CD4-positive, alpha-beta T cell (primary cell): ENCODE measurements at regions of chr17 and their contacts with region 1.

Region 1: DNA sequence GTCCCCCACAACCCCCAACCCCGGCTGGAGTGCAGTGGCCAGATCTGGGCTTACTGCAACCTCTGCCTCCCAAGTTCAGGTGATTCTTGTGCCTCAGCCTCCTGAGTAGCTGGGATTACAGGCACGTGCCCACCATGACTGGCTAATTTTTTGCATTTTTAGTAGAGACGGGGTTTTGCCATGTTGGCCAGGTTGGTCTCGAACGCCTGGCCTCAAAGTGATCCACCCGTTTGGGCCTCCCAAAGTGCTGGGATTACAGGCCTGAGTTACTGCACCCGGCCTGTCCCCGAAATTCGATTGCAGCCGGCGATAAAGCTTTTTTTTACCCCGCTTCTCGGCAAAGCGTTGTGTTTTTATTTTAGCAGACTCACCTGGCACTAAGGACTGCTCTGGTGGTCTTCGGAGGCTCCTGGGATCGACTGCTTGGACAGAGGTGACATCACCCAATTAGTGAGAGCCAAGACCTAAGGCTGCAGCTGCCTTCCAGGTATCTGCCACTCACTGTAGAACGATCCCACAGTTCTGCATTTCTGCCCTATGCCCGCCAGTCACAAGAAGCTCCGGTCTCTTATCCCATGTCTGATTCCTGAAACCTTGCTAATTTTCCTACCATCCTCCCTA is 82.2 kb upstream of the ARL4D start:
- DNase-seq: peak in 3 of 14 experiments; percentile 23 to 66 (median 42)
- ATAC-seq: no peak
- H3K4me3 ChIP-seq: no peak overlapping the region
- H3K4me3 Mint-ChIP-seq: peak overlapping the region; percentile 20
- H3K27ac ChIP-seq: no peak overlapping the region
- H3K27ac Mint-ChIP-seq: no peak overlapping the region
- H3K4me1 ChIP-seq: no peaks in the 10 kb centered on the region
- H3K4me1 Mint-ChIP-seq: peaks cover 4% of the 10 kb centered on the region
- H3K27me3 ChIP-seq: no peaks in the 10 kb centered on the region
- H3K27me3 Mint-ChIP-seq: no peaks in the 10 kb centered on the region
- CTCF ChIP-seq: no peak

Region 2: GRCh38 chr17:43024407-43025289 is 292.0 kb before region 1 on chr17 and contains the start of gene RND2:
- CTCF ChIA-PET with region 1: interaction called, 3 read pairs
- POLR2A ChIA-PET with region 1: interaction called, 13 read pairs
- intact Hi-C with region 1: no loop called
- DNase-seq: peak; percentile 60 to 91 (median 71)
- ATAC-seq: peak; percentile 56
- H3K4me3 ChIP-seq: peak within 1 kb of the TSS; percentile 74
- H3K4me3 Mint-ChIP-seq: peak within 1 kb of the TSS; percentile 90
- H3K27ac ChIP-seq: peak within 1 kb of the TSS in 1 of 2 donors; percentile 56
- H3K27ac Mint-ChIP-seq: peak within 1 kb of the TSS; percentile 77
- H3K4me1 ChIP-seq: peaks cover 48% of the 10 kb centered on the region
- H3K4me1 Mint-ChIP-seq: peaks cover 28% of the 10 kb centered on the region
- H3K27me3 ChIP-seq: no peaks in the 10 kb centered on the region
- H3K27me3 Mint-ChIP-seq: no peaks in the 10 kb centered on the region
- CTCF ChIP-seq: peak; percentile 21
- total RNA-seq, gene RND2: 0.27 to 0.28 TPM

Region 3: GRCh38 chr17:43170766-43171585 is 145.7 kb before region 1 on chr17 and contains the start of gene NBR1:
- CTCF ChIA-PET with region 1: interaction called, 3 read pairs
- POLR2A ChIA-PET with region 1: interaction called, 25 read pairs
- intact Hi-C with region 1: loop called in 1 of 2 experiments (anchors 2 kb)
- DNase-seq: peak; percentile 90 to 99 (median 92)
- ATAC-seq: peak; percentile 76
- H3K4me3 ChIP-seq: peak within 1 kb of the TSS; percentile 71
- H3K4me3 Mint-ChIP-seq: no peak within 1 kb of the TSS
- H3K27ac ChIP-seq: peak within 1 kb of the TSS; percentile 98
- H3K27ac Mint-ChIP-seq: no peak within 1 kb of the TSS
- H3K4me1 ChIP-seq: peaks cover 47% of the 10 kb centered on the region
- H3K4me1 Mint-ChIP-seq: peaks cover 27% of the 10 kb centered on the region
- H3K27me3 ChIP-seq: no peaks in the 10 kb centered on the region
- H3K27me3 Mint-ChIP-seq: no peaks in the 10 kb centered on the region
- CTCF ChIP-seq: no peak
- total RNA-seq, gene NBR1: 23.7 TPM

Region 4: DNA sequence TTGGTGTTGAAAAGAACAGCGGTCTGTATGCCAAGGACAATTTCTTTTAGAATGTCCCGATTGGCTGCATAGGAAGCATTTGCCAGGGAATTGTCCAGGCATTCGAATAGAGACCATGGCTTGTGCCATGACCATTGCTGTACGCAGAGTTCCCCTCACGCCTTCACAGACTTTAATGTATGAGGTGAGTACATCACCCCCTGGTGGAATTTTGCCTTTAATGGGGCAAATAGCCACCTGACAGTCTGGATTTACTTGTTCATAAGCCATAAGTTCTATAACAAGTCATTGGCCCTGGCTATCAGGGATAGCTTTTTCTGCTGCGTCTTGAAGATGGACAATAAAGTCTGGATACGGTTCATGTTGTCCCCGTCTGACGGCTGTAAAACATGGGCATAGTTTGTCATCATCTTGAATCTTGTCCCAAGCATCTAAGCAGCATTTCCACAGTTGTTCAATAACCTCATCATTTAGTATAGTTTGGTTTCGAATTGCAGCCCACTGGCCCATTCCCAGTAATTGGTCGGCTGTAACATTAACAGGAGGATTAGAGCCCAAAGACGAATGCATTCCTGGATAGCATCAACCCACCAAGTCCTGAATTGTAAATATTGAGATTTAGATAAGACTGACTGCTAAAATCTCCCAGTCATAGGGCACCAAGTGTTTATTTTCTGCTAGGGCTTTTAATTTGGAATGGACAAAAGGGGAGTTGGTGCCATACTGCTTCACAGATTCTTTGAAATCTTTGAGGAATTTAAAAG is 14.4 kb after region 1 on chr17:
- CTCF ChIA-PET with region 1: interaction called, 6 read pairs
- POLR2A ChIA-PET with region 1: interaction called, 16 read pairs
- intact Hi-C with region 1: no loop called
- DNase-seq: no peak
- ATAC-seq: no peak
- H3K4me3 ChIP-seq: no peak overlapping the region
- H3K4me3 Mint-ChIP-seq: no peak overlapping the region
- H3K27ac ChIP-seq: no peak overlapping the region
- H3K27ac Mint-ChIP-seq: no peak overlapping the region
- H3K4me1 ChIP-seq: peaks cover 8% of the 10 kb centered on the region
- H3K4me1 Mint-ChIP-seq: peaks cover 7% of the 10 kb centered on the region
- H3K27me3 ChIP-seq: peaks cover 0 to 5% of the 10 kb centered on the region in 2 experiments
- H3K27me3 Mint-ChIP-seq: peaks cover 18% of the 10 kb centered on the region
- CTCF ChIP-seq: no peak

Region 5: DNA sequence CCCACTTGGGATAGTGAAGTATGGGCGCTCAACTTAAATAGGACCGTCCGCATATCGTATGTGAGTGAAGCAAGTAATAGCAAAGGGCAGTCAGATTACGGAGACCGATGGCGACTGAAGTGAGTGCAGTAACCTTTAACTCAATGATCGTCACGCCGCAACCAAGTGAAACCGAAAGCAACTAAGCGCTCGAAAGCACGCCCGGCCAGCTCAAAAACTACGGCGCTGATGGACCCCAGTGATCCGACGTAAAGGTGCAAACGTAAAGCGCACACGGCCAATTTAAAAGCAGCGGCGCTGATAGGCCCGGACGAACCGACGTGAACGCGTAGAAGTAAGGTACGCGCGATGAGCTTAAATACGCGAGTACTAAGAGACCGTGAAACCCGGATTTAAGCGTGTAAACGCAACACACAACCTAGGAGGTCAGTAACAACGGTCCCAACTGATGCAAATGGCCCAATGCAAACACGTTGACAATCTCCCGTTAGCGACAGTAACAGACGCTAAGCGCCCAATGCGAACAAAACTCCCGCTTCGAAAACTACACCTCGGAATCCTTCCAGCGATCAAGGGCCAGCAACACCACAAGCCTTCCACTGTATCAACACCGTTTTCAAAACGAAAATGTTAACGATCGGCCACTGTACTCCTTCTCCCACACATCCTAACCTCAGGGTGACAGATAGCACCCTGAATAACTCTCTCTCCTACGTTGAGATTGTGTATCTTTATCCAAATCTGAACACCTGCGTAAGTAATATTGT is 44.3 kb after region 1 on chr17:
- CTCF ChIA-PET with region 1: interaction called, 3 read pairs
- POLR2A ChIA-PET with region 1: interaction called, 119 read pairs
- intact Hi-C with region 1: no loop called
- DNase-seq: peak; percentile 74 to 99 (median 86)
- ATAC-seq: peak; percentile 75
- H3K4me3 ChIP-seq: peak overlapping the region; percentile 63
- H3K4me3 Mint-ChIP-seq: peak overlapping the region; percentile 93
- H3K27ac ChIP-seq: peak overlapping the region; percentile 94 to 96
- H3K27ac Mint-ChIP-seq: peak overlapping the region; percentile 97
- H3K4me1 ChIP-seq: peaks cover 22% of the 10 kb centered on the region
- H3K4me1 Mint-ChIP-seq: peaks cover 15% of the 10 kb centered on the region
- H3K27me3 ChIP-seq: no peaks in the 10 kb centered on the region
- H3K27me3 Mint-ChIP-seq: peaks cover 5% of the 10 kb centered on the region
- CTCF ChIP-seq: no peak

Region 6: DNA sequence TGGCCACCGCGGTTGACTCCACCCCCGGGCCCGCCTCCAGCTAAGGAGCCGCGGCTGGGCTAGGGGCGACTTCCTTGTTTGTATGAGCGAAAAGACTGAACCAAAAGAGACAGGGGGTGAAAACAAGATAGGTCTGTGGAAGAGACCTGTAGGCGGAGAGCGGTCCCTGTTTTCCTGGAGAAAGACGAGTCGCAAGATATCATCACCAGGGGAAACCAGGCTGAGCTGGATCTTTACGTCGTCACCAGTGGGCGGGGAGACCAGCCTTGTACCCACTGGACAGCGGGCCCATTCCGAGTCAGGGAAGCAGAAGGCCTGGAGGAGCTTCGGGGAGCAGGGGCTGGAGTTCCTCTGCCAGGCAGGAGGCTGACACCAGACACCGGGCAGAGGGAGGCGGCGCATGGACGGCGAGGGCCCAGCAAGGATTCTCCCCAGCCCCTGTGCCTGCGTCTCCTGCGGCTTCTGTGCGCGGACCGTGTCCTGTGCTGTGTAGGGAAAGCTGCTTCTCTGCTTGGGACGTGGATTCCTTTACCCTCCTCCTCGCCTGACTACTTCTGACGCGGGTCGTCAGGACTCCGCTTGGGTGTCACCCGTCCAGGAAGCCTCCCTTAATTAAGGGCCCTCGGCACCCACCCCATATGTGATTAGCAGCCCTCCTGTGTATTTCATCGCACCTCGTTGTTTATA is 71.9 kb after region 1 on chr17:
- CTCF ChIA-PET with region 1: no interaction called
- POLR2A ChIA-PET with region 1: interaction called, 26 read pairs
- intact Hi-C with region 1: no loop called
- DNase-seq: peak; percentile 84 to 95 (median 90)
- ATAC-seq: peak; percentile 70
- H3K4me3 ChIP-seq: peak overlapping the region; percentile 71
- H3K4me3 Mint-ChIP-seq: peak overlapping the region; percentile 93
- H3K27ac ChIP-seq: peak overlapping the region; percentile 94 to 97
- H3K27ac Mint-ChIP-seq: peak overlapping the region; percentile 97
- H3K4me1 ChIP-seq: peaks cover 27% of the 10 kb centered on the region
- H3K4me1 Mint-ChIP-seq: peaks cover 36% of the 10 kb centered on the region
- H3K27me3 ChIP-seq: no peaks in the 10 kb centered on the region
- H3K27me3 Mint-ChIP-seq: no peaks in the 10 kb centered on the region
- CTCF ChIP-seq: no peak

Region 7: GRCh38 chr17:43418441-43419374 is 102.1 kb after region 1 on chr17:
- CTCF ChIA-PET with region 1: no interaction called
- POLR2A ChIA-PET with region 1: no interaction called
- intact Hi-C with region 1: no loop called
- DNase-seq: no peak
- ATAC-seq: no peak
- H3K4me3 ChIP-seq: no peak overlapping the region
- H3K4me3 Mint-ChIP-seq: no peak overlapping the region
- H3K27ac ChIP-seq: no peak overlapping the region
- H3K27ac Mint-ChIP-seq: no peak overlapping the region
- H3K4me1 ChIP-seq: no peaks in the 10 kb centered on the region
- H3K4me1 Mint-ChIP-seq: no peaks in the 10 kb centered on the region
- H3K27me3 ChIP-seq: peaks cover 2 to 6% of the 10 kb centered on the region in 2 experiments
- H3K27me3 Mint-ChIP-seq: peaks cover 49% of the 10 kb centered on the region
- CTCF ChIP-seq: no peak

Region 8: DNA sequence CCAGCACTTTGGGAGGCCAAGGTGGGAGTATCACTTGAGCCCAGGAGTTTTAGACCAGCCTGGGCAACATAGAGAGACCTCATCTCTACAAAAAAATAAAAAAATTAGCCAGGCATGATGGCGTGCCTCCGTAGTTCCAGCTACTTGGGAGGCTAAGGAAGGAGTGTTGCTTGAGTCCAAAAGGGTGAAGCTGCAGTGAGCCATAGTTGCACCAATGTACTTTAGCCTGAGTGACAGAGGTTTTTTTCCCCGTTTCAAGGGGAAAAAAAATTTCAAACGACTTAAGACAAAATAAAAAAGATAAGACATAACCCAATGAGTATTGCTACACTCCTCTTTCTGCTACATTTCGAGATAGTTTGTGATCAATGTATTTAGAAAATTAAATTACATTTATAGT is 174.0 kb after region 1 on chr17:
- CTCF ChIA-PET with region 1: no interaction called
- POLR2A ChIA-PET with region 1: no interaction called
- intact Hi-C with region 1: no loop called
- DNase-seq: no peak
- ATAC-seq: no peak
- H3K4me3 ChIP-seq: no peak overlapping the region
- H3K4me3 Mint-ChIP-seq: no peak overlapping the region
- H3K27ac ChIP-seq: no peak overlapping the region
- H3K27ac Mint-ChIP-seq: no peak overlapping the region
- H3K4me1 ChIP-seq: peaks cover 10% of the 10 kb centered on the region
- H3K4me1 Mint-ChIP-seq: peaks cover 16% of the 10 kb centered on the region
- H3K27me3 ChIP-seq: no peaks in the 10 kb centered on the region
- H3K27me3 Mint-ChIP-seq: no peaks in the 10 kb centered on the region
- CTCF ChIP-seq: no peak